Activated CD4-positive, alpha-beta T cell treated with anti-CD3 and anti-CD28 coated beads for 36 hours (primary cell): ENCODE measurements at regions of chr7 and their contacts with region 1.

Region 1: GRCh38 chr7:138752568-138753518 is 45.0 kb upstream of the TMEM213 start:
- DNase-seq: peak; percentile 96
- ATAC-seq: peak; percentile 94
- H3K4me3 Mint-ChIP-seq: peak overlapping the region; percentile 16
- H3K27ac Mint-ChIP-seq: peak overlapping the region; percentile 90
- H3K4me1 Mint-ChIP-seq: peaks cover 61% of the 10 kb centered on the region
- H3K27me3 Mint-ChIP-seq: no peaks in the 10 kb centered on the region

Region 2: DNA sequence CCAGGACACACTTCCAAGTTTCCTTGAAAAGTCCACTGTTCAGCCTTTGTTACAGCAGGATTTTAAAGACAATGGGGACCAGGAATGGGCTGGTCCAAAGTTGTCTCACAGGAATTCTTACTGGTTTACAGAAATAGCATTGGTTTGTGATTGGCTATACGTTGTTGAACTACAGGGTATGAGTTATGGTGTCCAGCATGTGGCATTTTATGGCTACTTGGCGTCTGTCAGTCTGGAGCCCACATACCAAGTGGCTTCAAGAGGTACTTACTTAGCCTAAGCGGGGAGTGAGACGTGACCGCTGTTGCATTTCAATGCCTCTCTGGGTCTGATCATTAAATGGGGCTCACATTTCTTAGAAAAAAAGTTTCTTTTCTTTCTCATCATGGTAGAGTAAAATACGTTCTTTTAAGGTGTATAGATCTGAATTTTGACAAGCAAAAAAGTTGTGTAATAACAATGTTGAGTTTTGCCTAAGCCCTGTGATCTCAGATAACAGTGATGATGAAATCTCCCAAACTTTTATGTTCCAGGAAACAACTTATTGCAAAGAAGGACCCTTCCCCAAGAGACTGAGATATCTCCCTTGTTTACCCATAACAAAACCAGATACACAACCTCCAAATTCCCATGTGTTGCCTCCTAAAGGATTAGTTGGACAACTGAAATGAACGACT is 392.8 kb before region 1 on chr7:
- CTCF ChIA-PET with region 1: no interaction called
- POLR2A ChIA-PET with region 1: no interaction called
- intact Hi-C with region 1: no loop called
- DNase-seq: no peak
- ATAC-seq: no peak
- H3K4me3 Mint-ChIP-seq: no peak overlapping the region
- H3K27ac Mint-ChIP-seq: no peak overlapping the region
- H3K4me1 Mint-ChIP-seq: no peaks in the 10 kb centered on the region
- H3K27me3 Mint-ChIP-seq: no peaks in the 10 kb centered on the region

Region 3: GRCh38 chr7:138459413-138460175 is 293.2 kb before region 1 on chr7:
- CTCF ChIA-PET with region 1: no interaction called
- POLR2A ChIA-PET with region 1: no interaction called
- intact Hi-C with region 1: loop called (anchors 1 to 2 kb)
- DNase-seq: peak; percentile 99
- ATAC-seq: peak; percentile 88
- H3K4me3 Mint-ChIP-seq: peak overlapping the region; percentile 85
- H3K27ac Mint-ChIP-seq: peak overlapping the region; percentile 85
- H3K4me1 Mint-ChIP-seq: peaks cover 25% of the 10 kb centered on the region
- H3K27me3 Mint-ChIP-seq: no peaks in the 10 kb centered on the region

Region 4: DNA sequence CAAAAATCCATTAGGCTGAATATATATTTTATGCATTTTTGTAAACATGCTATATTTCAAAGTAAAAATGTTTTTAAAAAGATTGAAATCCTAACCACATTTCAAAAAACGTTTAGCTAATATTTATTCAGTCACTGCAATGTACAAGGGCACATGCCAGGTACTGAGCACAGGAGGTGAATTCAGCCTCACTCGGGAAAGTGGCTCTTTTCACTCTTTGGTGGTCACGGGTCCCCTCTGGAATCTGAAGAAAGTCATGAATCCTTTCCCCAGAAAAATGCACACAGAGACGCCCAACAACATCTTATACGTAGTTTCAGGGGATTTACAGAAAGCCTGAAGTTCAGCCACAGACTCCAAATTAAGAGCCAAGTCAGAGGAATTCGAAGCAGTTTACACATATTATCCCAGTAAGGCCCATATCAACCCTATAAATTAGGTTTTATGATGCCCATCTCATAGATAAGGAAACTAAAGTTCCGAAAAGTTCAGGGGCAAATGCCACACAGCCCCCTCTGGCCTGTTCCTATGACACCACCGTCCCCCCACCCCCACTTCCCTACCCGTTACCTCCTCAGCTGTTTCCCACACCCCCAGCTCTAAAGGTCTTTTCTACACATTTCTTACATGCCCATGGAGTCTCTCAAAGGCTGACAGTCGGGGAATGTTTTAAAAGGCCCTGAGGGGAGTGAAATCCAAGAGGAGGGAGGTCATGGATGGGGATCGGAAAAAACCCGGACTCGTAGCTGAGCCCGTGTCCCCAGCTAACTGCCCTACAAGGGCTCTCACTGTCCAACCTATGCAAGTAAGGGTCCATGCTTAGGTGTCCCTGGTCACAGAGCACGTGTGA is 42.1 kb before region 1 on chr7:
- CTCF ChIA-PET with region 1: no interaction called
- POLR2A ChIA-PET with region 1: no interaction called
- intact Hi-C with region 1: no loop called
- DNase-seq: no peak
- ATAC-seq: no peak
- H3K4me3 Mint-ChIP-seq: no peak overlapping the region
- H3K27ac Mint-ChIP-seq: no peak overlapping the region
- H3K4me1 Mint-ChIP-seq: peaks cover 13% of the 10 kb centered on the region
- H3K27me3 Mint-ChIP-seq: no peaks in the 10 kb centered on the region

Region 5: GRCh38 chr7:138875794-138876193 is 123.0 kb after region 1 on chr7:
- CTCF ChIA-PET with region 1: no interaction called
- POLR2A ChIA-PET with region 1: no interaction called
- intact Hi-C with region 1: loop called (anchors 1 to 2 kb)
- DNase-seq: peak; percentile 80
- ATAC-seq: peak; percentile 98
- H3K4me3 Mint-ChIP-seq: no peak overlapping the region
- H3K27ac Mint-ChIP-seq: no peak overlapping the region
- H3K4me1 Mint-ChIP-seq: peaks cover 22% of the 10 kb centered on the region
- H3K27me3 Mint-ChIP-seq: no peaks in the 10 kb centered on the region

Region 6: DNA sequence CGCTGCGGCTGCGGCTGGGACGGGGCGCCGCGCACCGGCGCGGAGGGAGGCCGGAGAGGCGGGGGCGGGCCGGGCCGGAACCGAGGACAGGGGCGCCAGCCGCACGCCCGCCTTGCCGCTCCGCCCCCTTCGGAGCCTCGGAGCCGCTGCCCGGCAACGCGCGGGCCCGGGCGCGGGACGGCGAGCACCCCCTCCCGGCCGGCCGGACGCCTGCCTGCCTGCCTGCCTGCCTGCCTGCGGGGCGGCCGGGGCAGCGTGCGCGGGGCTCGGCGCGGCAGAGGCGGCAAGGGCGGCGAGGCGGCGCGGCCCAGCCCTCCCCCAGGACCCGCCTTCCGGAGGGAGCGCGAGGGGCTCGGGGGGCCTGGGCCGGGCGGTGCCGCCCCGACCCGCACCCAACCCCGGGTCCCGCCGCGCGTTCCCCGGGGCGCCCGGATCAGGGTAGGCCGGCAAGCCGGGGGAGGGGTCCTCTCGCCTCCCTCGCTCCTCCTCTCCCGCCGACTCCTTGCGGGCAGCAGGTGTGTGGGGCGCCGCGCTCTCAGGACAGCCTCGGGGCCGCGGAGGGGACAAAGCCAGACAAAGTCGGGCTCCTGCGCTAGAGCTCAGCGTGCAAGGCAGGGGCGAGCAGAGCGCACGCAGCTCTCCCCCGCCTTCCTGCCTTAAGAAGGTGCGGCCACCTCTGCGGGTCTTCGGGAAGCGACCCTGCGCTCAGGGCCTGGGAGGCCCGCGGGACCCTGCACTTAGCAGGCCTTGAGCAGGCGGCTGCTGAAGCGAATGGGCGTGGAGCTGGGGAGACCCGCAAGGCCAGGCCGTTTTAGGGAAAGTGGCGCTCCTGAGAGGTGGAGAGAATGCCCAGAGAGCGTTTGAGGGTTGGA is 228.7 kb after region 1 on chr7 and contains the start of gene KIAA1549:
- CTCF ChIA-PET with region 1: no interaction called
- POLR2A ChIA-PET with region 1: no interaction called
- intact Hi-C with region 1: loop called in 1 of 2 experiments (anchors 2 kb)
- DNase-seq: peak; percentile 71
- ATAC-seq: peak; percentile 89
- H3K4me3 Mint-ChIP-seq: peak within 1 kb of the TSS; percentile 75
- H3K27ac Mint-ChIP-seq: peak within 1 kb of the TSS; percentile 12
- H3K4me1 Mint-ChIP-seq: peaks cover 13% of the 10 kb centered on the region
- H3K27me3 Mint-ChIP-seq: peaks cover 40% of the 10 kb centered on the region
- total RNA-seq, gene KIAA1549: 0.46 to 0.53 TPM

Region 7: DNA sequence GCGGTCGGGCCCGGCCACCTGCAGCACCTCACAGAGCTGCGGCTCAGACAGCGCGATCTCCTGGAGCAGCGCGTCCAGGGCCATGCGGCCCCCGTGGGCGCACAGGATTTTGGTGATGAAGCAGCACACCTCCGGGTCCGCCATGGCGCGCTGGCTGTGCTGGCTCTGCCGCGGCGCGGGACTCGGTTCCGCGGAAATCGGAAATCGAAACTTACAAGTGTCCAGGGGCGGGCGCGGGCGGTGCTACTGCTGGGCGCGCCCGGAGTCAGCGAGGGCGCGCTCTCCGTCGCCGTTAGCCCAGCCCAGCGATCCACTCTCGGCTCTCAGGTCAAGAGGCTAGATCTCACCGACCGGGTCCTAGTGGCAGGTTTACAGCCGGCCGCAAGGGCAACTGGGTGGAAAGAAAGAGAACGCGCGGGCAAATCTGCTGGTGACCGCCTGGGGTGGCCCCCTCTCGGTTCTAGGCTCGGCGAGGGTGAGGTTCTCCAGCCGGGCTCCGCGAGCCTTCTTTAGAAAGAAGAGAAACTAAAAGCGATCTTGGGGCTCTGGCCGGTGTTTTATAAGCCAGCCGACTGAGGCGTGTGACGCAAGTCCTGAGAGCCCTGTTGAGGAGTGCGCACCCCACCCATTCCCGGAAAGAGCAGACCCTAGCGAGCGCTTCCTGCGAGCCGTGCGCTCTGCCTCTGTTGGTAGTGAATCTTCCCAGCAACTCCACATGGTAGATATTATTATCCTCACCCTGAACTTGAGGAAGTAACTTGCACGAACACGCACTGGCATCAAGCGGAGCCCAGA is 356.5 kb after region 1 on chr7 and contains the start of gene ZC3HAV1:
- CTCF ChIA-PET with region 1: no interaction called
- POLR2A ChIA-PET with region 1: no interaction called
- intact Hi-C with region 1: loop called in 1 of 2 experiments (anchors 5 kb)
- DNase-seq: peak; percentile 93
- ATAC-seq: peak; percentile 73
- H3K4me3 Mint-ChIP-seq: peak within 1 kb of the TSS; percentile 99
- H3K27ac Mint-ChIP-seq: peak within 1 kb of the TSS; percentile 96
- H3K4me1 Mint-ChIP-seq: peaks cover 27% of the 10 kb centered on the region
- H3K27me3 Mint-ChIP-seq: no peaks in the 10 kb centered on the region
- total RNA-seq, gene ZC3HAV1: 110 to 120 TPM